CD4-positive, alpha-beta T cell (primary cell): ENCODE measurements at regions of chr1 and their contacts with region 1.

Region 1: DNA sequence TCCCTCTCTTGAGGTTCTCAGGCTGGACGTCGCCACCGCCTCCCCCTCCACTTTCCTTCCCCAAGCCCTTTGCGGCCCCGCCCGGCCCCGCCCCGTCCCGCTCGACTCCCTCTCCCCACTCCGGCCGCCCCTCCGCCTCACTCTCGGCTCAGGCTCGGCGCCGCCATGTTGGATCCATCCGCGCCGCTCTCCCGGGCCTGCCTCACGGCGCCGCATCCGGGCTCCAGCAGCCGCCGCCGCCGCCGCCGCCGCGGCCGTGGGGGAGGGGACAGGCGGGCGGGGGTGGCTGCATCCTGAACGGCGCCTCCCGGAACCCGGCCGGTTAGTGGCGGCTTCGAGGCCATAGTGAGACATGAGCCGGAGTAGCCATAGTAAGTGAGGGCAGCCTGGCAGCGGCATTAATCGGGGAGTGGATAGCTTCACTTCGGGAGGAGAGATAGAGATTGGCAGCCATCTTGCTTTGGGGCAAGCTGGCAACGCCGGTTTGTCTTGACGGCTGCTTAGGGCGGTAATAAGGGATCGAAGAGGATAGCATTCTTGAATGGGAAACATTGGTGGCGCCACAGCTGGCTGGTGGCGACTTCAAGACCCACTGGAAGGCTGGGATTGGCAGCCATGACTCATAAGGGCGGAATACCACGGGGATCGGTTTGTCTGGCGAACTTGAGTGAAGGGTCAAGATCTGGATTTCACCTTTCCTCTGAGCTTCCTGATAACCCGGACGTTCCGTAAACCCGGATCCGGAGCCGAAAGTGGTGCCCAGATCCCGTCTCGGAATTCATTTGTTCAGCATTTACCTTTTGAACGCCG is at the start of gene DEDD:
- DNase-seq: peak; percentile 80 to 97 (median 86)
- ATAC-seq: peak; percentile 95
- H3K4me3 ChIP-seq: peak within 1 kb of the TSS; percentile 98
- H3K4me3 Mint-ChIP-seq: no peak within 1 kb of the TSS
- H3K27ac ChIP-seq: peak within 1 kb of the TSS; percentile 79 to 94
- H3K27ac Mint-ChIP-seq: no peak within 1 kb of the TSS
- H3K4me1 ChIP-seq: peaks cover 46% of the 10 kb centered on the region
- H3K4me1 Mint-ChIP-seq: peaks cover 41% of the 10 kb centered on the region
- H3K27me3 ChIP-seq: no peaks in the 10 kb centered on the region
- H3K27me3 Mint-ChIP-seq: no peaks in the 10 kb centered on the region
- CTCF ChIP-seq: no peak
- total RNA-seq, gene DEDD: 35.5 to 36.6 TPM

Region 2: GRCh38 chr1:160284782-160285344 is 847.8 kb before region 1 on chr1 and contains the start of gene PEX19:
- CTCF ChIA-PET with region 1: no interaction called
- POLR2A ChIA-PET with region 1: no interaction called
- intact Hi-C with region 1: loop called in 1 of 2 experiments (anchors 10 kb)
- DNase-seq: peak; percentile 90 to 96 (median 92)
- ATAC-seq: peak; percentile 100
- H3K4me3 ChIP-seq: peak within 1 kb of the TSS; percentile 94
- H3K4me3 Mint-ChIP-seq: peak within 1 kb of the TSS; percentile 99
- H3K27ac ChIP-seq: peak within 1 kb of the TSS; percentile 37 to 60
- H3K27ac Mint-ChIP-seq: peak within 1 kb of the TSS; percentile 87
- H3K4me1 ChIP-seq: peaks cover 23% of the 10 kb centered on the region
- H3K4me1 Mint-ChIP-seq: peaks cover 35% of the 10 kb centered on the region
- H3K27me3 ChIP-seq: no peaks in the 10 kb centered on the region
- H3K27me3 Mint-ChIP-seq: no peaks in the 10 kb centered on the region
- CTCF ChIP-seq: no peak
- total RNA-seq, gene PEX19: 32.0 to 33.4 TPM

Region 3: DNA sequence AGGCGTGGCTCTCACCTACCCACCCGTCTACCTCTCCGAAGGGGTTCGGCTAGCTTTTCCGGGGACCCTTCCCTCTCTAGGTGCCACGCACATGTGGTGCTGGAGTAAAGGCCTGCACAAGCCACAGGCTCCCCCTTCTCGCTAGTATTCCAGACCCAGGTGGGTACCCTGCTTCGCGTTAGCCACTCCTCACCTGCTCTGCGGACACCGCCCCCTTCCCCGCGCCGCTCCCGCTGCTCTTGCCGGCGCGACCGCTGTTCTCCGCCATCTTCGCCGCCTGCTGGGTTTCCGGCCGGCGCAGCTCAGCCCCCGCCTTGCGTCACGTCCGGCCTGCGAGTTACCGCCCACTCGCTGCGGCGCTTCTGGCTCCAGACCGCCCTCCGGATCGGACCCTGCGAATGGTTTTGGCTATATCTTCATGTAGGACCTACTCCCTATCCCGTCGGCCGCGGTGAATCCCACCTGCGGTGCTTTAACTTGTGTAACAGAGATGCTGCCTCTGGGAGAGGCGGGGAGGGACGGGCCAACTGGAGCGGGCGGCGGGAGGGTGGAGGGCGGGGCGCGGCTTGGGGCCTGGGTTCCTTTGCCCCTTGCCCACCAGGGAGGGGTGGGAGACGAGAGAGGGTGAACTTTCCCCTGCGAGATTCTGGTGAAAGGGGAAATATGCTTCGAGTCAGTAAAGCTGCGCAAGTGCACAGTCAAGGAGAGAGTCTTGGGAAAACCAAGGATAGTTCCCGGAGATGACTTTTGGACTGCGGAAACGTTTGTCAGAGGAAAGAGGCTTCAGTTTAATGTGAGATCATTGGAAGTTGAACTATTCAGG is 14.6 kb before region 1 on chr1 and contains the starts of genes NIT1 and PFDN2:
- CTCF ChIA-PET with region 1: interaction called, 6 read pairs
- POLR2A ChIA-PET with region 1: interaction called, 35 read pairs
- intact Hi-C with region 1: loop called (anchors 1 kb)
- DNase-seq: peak; percentile 65 to 93 (median 78)
- ATAC-seq: peak; percentile 71
- H3K4me3 ChIP-seq: peak within 1 kb of the TSS; percentile 91
- H3K4me3 Mint-ChIP-seq: peak within 1 kb of the TSS; percentile 97
- H3K27ac ChIP-seq: peak within 1 kb of the TSS; percentile 81 to 91
- H3K27ac Mint-ChIP-seq: peak within 1 kb of the TSS; percentile 91
- H3K4me1 ChIP-seq: peaks cover 53% of the 10 kb centered on the region
- H3K4me1 Mint-ChIP-seq: peaks cover 67% of the 10 kb centered on the region
- H3K27me3 ChIP-seq: no peaks in the 10 kb centered on the region
- H3K27me3 Mint-ChIP-seq: no peaks in the 10 kb centered on the region
- CTCF ChIP-seq: no peak
- total RNA-seq, gene NIT1: 15.9 to 18.0 TPM
- total RNA-seq, gene PFDN2: 46.2 to 57.7 TPM